Right ventricle myocardium inferior (tissue), 1 donor: ENCODE measurements at regions of chr19 and their contacts with region 1.

Region 1: GRCh38 chr19:3062168-3063102 is at the start of gene TLE5:
- DNase-seq: peak; percentile 87
- ATAC-seq: peak; percentile 58
- total RNA-seq, gene TLE5: 775 TPM

Region 2: GRCh38 chr19:3029065-3029923 is 33.1 kb before region 1 on chr19 and contains the start of gene TLE2:
- intact Hi-C with region 1: loop called (anchors 5 kb)
- DNase-seq: peak; percentile 71
- ATAC-seq: peak; percentile 49
- total RNA-seq, gene TLE2: 58.6 TPM

Region 3: DNA sequence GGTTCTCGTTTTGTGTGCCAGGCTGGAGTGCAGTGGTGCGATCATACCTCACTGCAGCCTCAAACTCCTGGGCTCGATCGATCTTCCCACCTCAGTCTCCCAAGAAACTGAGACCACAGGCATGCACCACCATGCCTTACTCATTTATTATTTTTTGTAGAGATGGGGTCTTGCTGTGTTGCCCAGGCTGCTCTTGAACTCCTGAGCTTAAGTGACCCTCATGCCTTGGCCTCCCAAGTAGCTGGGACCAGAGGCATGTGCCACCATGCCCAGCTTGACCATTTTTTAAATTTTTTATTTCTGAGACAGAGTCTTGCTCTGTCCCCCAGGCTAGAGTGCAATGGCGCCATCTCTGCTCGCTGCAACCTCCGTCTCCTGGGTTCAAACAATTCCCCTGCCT is 21.5 kb after region 1 on chr19:
- intact Hi-C with region 1: no loop called
- DNase-seq: no peak
- ATAC-seq: no peak

Region 4: DNA sequence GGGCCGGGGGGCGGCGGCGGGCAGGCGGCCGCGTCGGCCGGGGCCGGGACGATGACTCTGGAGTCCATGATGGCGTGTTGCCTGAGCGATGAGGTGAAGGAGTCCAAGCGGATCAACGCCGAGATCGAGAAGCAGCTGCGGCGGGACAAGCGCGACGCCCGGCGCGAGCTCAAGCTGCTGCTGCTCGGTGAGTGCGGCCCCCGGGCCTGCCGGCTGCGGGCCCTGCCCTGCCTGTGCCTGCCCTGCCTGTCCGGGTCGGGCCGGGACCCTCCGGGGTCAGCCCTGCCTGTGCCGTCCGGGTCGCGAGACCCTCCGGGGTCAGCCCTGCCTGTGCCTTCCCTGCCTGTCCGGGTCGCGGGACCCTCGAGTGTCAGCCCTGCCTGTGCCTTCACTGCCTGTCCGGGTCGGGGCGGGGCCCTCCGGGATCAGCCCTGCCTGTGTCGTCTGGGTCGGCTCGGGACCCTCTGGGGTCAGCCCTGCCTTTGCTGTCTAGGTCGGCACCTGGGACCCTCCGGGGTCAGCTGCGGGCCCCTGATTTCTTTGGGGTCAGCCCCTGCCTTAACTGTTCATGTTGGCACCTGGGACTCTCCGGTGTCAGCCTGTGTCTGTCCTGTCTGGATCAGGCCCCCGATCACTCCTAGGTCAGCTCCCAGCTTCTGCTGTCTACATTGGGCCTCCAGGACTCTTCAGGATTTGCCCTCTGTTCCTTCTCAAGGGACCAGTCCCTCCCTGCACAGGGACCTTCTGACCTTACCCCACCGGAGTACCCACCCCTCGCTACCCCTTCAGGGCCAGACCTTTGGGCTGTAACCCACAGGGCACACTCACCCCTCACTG is 32.4 kb after region 1 on chr19:
- intact Hi-C with region 1: loop called (anchors 5 kb)
- DNase-seq: no peak
- ATAC-seq: no peak